Activated naive CD8-positive, alpha-beta T cell treated with anti-CD3 and anti-CD28 coated beads, Interleukin-2, amount 10 ng/mL, durations not matched to agents 7 days and 5 days (primary cell): ENCODE measurements at regions of chr1 and their contacts with region 1.

Region 1: GRCh38 chr1:39258146-39258924 is 53.8 kb downstream of the MACF1 start:
- DNase-seq: peak; percentile 49
- ATAC-seq: peak; percentile 75
- H3K4me3 Mint-ChIP-seq: no peak overlapping the region
- H3K27ac Mint-ChIP-seq: no peak overlapping the region
- H3K4me1 Mint-ChIP-seq: peaks cover 15% of the 10 kb centered on the region
- H3K27me3 Mint-ChIP-seq: no peaks in the 10 kb centered on the region

Region 2: DNA sequence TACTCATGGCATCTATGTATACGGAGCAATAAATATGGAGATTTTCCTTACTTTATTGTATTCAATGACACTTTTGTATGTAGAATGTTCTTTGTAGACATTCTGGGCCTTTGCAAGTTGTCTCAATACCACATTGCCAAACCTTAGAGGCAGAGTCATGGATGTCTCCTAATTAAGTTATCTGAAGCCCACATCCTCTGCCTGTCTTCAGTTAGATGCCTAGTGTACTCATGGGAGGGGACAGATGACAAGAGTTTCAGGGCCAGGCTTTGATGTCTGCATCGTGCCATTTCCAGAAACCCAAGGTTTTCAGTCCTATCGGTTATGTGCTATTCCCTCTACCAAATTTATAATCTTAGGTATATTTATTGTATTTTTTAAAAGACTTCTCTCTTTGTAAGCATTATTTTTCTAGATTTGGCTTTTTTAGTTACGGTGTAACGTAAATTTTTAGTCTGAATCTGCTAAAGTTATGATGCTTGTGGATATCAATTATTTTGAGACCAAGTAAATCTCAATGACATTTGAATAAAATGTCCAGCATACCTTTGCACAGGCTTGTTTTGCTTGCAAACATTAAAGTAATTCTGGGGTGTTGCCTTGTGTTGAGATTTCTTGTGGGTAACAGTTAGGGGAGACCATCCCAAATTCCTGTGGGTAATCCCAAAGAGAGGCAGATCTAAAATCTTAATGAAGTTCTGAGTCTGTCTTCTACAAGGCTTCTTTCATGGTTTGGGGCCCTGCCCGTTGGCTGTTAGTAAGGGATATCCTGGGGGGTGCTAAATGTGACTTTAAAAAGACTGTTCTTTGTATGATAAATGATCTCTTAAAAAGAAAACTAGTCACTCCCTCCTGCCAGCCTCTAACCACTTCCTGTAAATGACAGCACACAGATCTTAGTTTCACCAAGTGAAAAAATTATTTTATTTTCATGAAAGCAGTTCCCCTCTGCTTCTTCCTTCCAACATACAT is 61.8 kb before region 1 on chr1:
- POLR2A ChIA-PET with region 1: interaction called, 22 read pairs
- DNase-seq: peak; percentile 44
- ATAC-seq: peak; percentile 61
- H3K4me3 Mint-ChIP-seq: peak overlapping the region; percentile 78
- H3K27ac Mint-ChIP-seq: peak overlapping the region; percentile 97
- H3K4me1 Mint-ChIP-seq: peaks cover 59% of the 10 kb centered on the region
- H3K27me3 Mint-ChIP-seq: no peaks in the 10 kb centered on the region